ENCODE measurements at regions of chr19 and their contacts with region 1.

Region 1: GRCh38 chr19:3710265-3710812 is 2.2 kb downstream of the TJP3 start:
- DNase-seq: peak; percentile 77 to 91
- H3K4me3 ChIP-seq: no peak overlapping the region
- H3K4me3 Mint-ChIP-seq: peak overlapping the region; percentile 33
- H3K27ac Mint-ChIP-seq: peak overlapping the region; percentile 83
- H3K4me1 ChIP-seq: peaks cover 34% of the 10 kb centered on the region
- H3K4me1 Mint-ChIP-seq: peaks cover 15% of the 10 kb centered on the region
- H3K27me3 ChIP-seq: no peaks in the 10 kb centered on the region
- H3K27me3 Mint-ChIP-seq: no peaks in the 10 kb centered on the region
- CTCF ChIP-seq: no peak

Region 2: DNA sequence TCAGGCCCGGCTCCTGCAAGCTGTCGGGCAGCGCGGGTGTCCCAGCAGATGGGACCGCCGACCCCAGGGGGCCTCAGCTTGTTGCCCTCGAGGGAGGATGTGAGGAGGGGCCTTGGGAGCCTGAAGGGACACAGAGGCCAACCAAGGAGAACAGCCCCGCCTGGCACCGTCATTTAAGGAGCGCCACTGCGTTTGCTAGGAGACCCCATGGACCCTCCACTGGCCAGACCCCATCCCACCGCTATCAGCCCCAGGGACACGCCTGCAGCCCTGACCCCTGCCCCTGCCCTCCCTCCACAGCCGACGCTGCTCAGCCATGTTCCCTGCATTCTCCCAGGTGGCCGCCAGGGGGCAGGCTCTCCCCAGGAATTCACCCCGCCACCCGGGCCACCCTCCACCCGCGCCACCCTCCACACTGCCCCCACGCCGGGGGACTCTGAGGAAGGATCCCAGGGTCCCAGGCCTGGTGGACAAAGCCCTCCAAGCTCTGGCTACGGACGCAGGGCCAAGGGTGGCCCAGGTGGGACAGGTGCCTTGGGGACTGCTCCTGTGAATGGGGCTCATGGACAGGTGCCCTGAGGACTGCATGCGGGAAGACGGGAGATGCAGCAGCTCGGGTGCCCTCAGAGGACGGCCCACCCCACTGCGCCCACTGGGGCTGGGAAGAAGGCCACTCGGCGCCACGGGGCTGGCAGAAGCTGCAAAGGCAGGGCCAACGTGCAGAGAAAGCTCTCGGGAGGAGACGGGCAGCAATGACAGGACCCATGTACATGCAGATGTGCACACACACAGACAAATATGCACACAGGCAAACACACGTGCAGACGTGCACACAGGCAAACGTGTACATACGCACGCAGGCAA is 44.4 kb before region 1 on chr19:
- CTCF ChIA-PET with region 1: interaction called, 4 read pairs
- POLR2A ChIA-PET with region 1: no interaction called
- intact Hi-C with region 1: loop called (anchors 5 kb)
- DNase-seq: peak in 1 of 2 experiments; percentile 77
- H3K4me3 ChIP-seq: no peak overlapping the region
- H3K4me3 Mint-ChIP-seq: no peak overlapping the region
- H3K27ac Mint-ChIP-seq: no peak overlapping the region
- H3K4me1 ChIP-seq: peaks cover 11% of the 10 kb centered on the region
- H3K4me1 Mint-ChIP-seq: no peaks in the 10 kb centered on the region
- H3K27me3 ChIP-seq: no peaks in the 10 kb centered on the region
- H3K27me3 Mint-ChIP-seq: no peaks in the 10 kb centered on the region
- CTCF ChIP-seq: peak; percentile 91 to 92

Region 3: DNA sequence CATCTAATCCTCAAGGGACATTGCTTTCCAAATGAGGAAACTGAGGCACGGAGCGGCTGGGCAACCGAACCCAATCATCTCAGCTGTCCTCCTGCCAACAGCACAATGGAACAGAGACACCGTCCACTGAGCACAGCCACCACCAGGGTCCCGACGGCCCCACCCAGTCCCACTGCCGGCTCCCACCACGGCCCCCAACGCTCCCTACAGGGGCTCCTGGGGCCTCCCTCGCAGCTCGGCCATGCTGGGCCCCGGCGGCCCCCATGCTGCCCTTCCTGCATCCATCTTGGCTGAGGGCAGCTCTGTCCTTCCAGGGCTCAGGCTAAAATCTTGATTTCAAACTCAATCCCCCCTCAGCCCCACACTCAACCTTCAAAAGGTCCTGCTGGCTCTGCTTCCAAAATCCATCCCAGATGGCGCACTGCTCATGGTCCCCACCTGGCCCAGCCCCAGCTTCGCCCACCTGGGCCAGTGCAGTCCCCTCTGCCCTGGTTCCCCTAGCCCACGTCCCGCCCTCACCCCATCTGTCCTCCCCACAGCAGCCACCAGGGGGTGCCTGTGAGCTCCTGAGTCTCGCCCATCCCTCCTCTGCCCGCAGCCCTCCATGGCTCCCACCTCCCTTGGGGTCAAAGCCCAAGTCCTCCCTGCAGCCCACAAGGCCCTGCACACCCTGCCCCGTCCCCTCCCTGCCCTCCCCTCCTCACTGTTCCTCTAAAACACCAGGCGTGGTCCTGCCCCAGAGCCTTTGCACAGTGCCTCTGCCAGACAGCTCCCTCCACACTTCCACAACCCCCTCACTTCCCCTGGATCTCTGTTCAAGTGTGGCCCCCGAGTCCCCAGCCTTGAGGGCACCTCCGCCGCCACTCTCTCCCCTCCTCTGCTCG is 18.0 kb before region 1 on chr19:
- CTCF ChIA-PET with region 1: no interaction called
- POLR2A ChIA-PET with region 1: no interaction called
- intact Hi-C with region 1: no loop called
- DNase-seq: peak in 1 of 2 experiments; percentile 39
- H3K4me3 ChIP-seq: no peak overlapping the region
- H3K4me3 Mint-ChIP-seq: no peak overlapping the region
- H3K27ac Mint-ChIP-seq: no peak overlapping the region
- H3K4me1 ChIP-seq: no peaks in the 10 kb centered on the region
- H3K4me1 Mint-ChIP-seq: no peaks in the 10 kb centered on the region
- H3K27me3 ChIP-seq: no peaks in the 10 kb centered on the region
- H3K27me3 Mint-ChIP-seq: no peaks in the 10 kb centered on the region
- CTCF ChIP-seq: peak; percentile 38 to 60

Region 4: DNA sequence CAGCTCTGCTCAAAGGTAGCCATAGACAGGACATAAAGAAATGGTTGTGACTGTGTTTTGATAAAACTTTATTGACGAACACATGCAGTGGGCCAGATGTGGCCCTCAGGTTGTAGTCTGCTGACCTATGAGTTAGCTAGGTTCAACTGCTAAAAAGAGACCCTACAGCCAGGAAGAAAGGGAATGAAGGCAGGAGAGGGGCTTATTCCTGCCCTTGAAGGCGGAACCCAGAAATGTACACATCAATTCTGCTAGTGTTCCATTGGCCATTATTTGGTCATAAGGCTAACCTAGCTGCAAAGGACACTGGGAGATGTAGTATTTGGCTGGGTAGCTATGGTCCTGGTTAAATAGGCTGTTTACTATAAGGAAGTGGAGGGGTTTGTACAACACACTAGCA is 33.1 kb after region 1 on chr19:
- CTCF ChIA-PET with region 1: no interaction called
- POLR2A ChIA-PET with region 1: no interaction called
- intact Hi-C with region 1: no loop called
- DNase-seq: peak in 1 of 2 experiments; percentile 19
- H3K4me3 ChIP-seq: no peak overlapping the region
- H3K4me3 Mint-ChIP-seq: no peak overlapping the region
- H3K27ac Mint-ChIP-seq: no peak overlapping the region
- H3K4me1 ChIP-seq: no peaks in the 10 kb centered on the region
- H3K4me1 Mint-ChIP-seq: no peaks in the 10 kb centered on the region
- H3K27me3 ChIP-seq: no peaks in the 10 kb centered on the region
- H3K27me3 Mint-ChIP-seq: no peaks in the 10 kb centered on the region
- CTCF ChIP-seq: no peak

Measured in Caco-2 (cell line).